Panc1 (cell line): ENCODE measurements at regions of chr22 and their contacts with region 1.

Region 1: DNA sequence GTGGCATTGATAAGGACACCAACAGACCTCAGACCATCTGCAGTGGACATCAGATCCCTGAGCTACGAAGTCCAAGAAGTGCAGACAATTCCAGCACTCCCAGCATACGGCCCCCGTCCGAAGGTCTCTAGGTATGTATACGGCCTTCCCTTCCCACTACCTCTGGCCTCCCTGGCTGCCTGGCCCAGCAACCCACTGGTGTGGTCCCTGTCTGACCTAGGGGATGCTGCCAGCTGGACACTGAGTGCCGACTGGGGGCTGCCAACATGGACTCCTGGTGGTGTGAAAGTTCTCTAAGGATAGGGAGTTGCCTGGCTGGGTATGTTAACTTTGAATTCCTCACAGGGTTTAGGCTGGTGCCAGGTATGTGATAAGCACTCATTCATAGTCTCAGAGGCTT is 17.5 kb upstream of the TEF start:
- DNase-seq: no peak
- ATAC-seq: no peak
- H3K4me3 ChIP-seq: no peak overlapping the region
- H3K27ac ChIP-seq: no peak overlapping the region
- H3K4me1 ChIP-seq: peaks cover 26% of the 10 kb centered on the region
- H3K27me3 ChIP-seq: no peaks in the 10 kb centered on the region
- CTCF ChIP-seq: no peak

Region 2: GRCh38 chr22:41334951-41335635 is 29.1 kb before region 1 on chr22:
- CTCF ChIA-PET with region 1: interaction called, 11 read pairs
- POLR2A ChIA-PET with region 1: no interaction called
- in situ Hi-C with region 1: no loop called
- intact Hi-C with region 1: no loop called
- DNase-seq: no peak
- ATAC-seq: no peak
- H3K4me3 ChIP-seq: no peak overlapping the region
- H3K27ac ChIP-seq: no peak overlapping the region
- H3K4me1 ChIP-seq: no peaks in the 10 kb centered on the region
- H3K27me3 ChIP-seq: no peaks in the 10 kb centered on the region
- CTCF ChIP-seq: no peak